ENCODE measurements at regions of chr2 and their contacts with region 1.

Region 1: GRCh38 chr2:209334198-209335017 is 89.4 kb upstream of the MAP2 start:
- DNase-seq: peak; percentile 69
- H3K4me3 ChIP-seq: no peak overlapping the region
- H3K27ac ChIP-seq: no peak overlapping the region
- H3K4me1 ChIP-seq: no peaks in the 10 kb centered on the region
- H3K27me3 ChIP-seq: peaks cover 1 to 2% of the 10 kb centered on the region in 2 experiments
- CTCF ChIP-seq: peak; percentile 73 to 78
- POLR2A ChIP-seq: no peak

Region 2: GRCh38 chr2:208175069-208175839 is 1159.2 kb before region 1 on chr2:
- CTCF ChIA-PET with region 1: interaction called, 9 read pairs
- POLR2A ChIA-PET with region 1: no interaction called
- dilution Hi-C with region 1: no loop called
- intact Hi-C with region 1: loop called (anchors 2 kb)
- DNase-seq: peak; percentile 80
- H3K4me3 ChIP-seq: no peak overlapping the region
- H3K27ac ChIP-seq: no peak overlapping the region
- H3K4me1 ChIP-seq: no peaks in the 10 kb centered on the region
- H3K27me3 ChIP-seq: no peaks in the 10 kb centered on the region
- CTCF ChIP-seq: peak; percentile 86 to 88
- POLR2A ChIP-seq: no peak

Region 3: DNA sequence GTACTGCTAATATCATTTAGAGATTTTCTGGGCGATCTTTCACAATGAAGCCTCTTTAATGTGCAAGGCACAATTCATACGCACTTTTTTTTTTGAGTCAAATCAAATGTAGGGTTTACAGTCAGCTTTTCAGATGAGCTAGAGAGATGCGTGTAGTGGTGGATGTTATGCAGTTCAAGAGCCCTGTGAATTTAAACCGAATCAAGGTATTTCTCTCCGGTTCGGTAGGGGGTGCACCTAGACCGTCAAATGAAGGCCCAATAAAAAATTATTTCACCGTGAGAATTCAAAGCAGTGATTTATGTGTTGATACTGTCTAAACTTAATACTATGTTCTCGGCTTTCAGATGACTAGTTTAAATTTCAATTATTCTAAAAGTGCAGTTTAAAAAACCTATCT is 926.7 kb before region 1 on chr2:
- CTCF ChIA-PET with region 1: interaction called, 16 read pairs
- POLR2A ChIA-PET with region 1: no interaction called
- dilution Hi-C with region 1: no loop called
- intact Hi-C with region 1: no loop called
- DNase-seq: peak; percentile 11
- H3K4me3 ChIP-seq: no peak overlapping the region
- H3K27ac ChIP-seq: no peak overlapping the region
- H3K4me1 ChIP-seq: no peaks in the 10 kb centered on the region
- H3K27me3 ChIP-seq: peaks cover 32 to 42% of the 10 kb centered on the region in 2 experiments
- CTCF ChIP-seq: no peak
- POLR2A ChIP-seq: no peak

Region 4: DNA sequence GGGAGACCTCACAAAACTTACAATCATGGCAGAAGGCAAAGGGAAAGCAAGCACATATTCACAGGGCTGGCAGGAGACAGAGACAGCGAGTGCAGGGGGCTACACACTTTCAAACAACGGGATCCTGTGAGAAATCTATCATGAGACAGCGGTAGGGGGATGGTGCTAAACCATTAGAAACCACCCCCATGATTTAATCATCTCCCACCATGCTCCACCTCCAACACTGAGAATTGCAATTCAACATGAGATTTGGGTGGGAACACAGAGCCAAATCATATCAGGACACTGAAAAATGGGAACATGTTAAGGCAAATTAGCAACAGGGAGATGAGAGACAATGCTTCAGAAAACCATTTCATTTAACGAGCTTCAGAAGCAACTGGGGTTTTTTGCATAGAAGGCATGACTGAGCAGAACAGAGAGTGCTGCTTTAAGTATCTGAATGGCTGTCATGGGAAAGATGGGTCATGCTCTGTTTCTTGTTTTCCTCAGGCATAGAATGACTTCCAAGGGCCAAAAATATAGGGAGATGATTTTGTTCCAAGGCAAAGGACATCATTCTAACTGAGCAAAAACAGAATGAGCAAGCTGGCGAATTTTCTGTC is 11.4 kb before region 1 on chr2:
- CTCF ChIA-PET with region 1: interaction called, 22 read pairs
- POLR2A ChIA-PET with region 1: no interaction called
- dilution Hi-C with region 1: no loop called
- intact Hi-C with region 1: no loop called
- DNase-seq: no peak
- H3K4me3 ChIP-seq: no peak overlapping the region
- H3K27ac ChIP-seq: no peak overlapping the region
- H3K4me1 ChIP-seq: no peaks in the 10 kb centered on the region
- H3K27me3 ChIP-seq: no peaks in the 10 kb centered on the region
- CTCF ChIP-seq: no peak
- POLR2A ChIP-seq: no peak

Region 5: DNA sequence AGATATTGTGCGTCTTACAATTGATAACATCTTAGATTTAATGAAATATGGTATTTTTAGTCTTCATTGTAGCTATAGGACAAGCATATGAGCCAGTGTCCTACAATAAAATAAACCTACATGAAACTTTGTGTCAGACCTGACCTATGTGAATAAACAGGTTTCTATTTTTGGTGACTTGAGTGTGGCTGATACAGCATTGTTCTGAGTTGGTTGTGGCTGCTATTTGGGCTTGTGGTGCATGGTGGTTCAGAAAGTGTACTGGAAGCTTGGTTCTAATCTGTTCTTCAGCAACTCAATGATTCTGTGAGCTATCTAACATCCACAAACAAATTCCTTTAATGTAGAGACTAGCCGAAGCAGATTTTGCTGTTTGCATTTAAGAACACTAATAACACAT is 24.6 kb after region 1 on chr2:
- CTCF ChIA-PET with region 1: interaction called, 10 read pairs
- POLR2A ChIA-PET with region 1: no interaction called
- dilution Hi-C with region 1: no loop called
- intact Hi-C with region 1: no loop called
- DNase-seq: no peak
- H3K4me3 ChIP-seq: no peak overlapping the region
- H3K27ac ChIP-seq: no peak overlapping the region
- H3K4me1 ChIP-seq: no peaks in the 10 kb centered on the region
- H3K27me3 ChIP-seq: no peaks in the 10 kb centered on the region
- CTCF ChIP-seq: no peak
- POLR2A ChIP-seq: no peak

Region 6: DNA sequence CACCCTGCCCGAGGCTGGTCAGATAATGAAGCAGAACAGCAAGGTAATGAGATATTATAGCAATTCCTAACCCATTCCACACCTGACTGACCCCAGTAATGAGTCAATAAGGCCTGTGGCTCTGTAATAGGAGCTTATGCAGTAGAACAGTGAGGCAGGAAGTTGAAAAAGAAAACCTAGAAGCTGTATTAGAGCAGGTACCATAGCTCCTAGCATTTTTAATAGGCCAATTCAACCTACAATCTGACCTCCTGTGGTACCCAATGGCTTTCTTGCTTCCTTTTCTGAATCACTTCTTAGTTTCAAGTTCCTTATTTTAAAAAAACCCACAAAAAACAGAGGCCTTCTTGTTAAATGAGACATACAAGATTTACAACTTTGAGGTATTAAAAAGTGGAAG is 45.9 kb after region 1 on chr2:
- CTCF ChIA-PET with region 1: interaction called, 5 read pairs
- POLR2A ChIA-PET with region 1: no interaction called
- dilution Hi-C with region 1: no loop called
- intact Hi-C with region 1: loop called (anchors 5 kb)
- DNase-seq: no peak
- H3K4me3 ChIP-seq: no peak overlapping the region
- H3K27ac ChIP-seq: no peak overlapping the region
- H3K4me1 ChIP-seq: peaks cover 9% of the 10 kb centered on the region
- H3K27me3 ChIP-seq: no peaks in the 10 kb centered on the region
- CTCF ChIP-seq: no peak
- POLR2A ChIP-seq: no peak

Region 7: GRCh38 chr2:209577376-209578357 is 243.3 kb after region 1 on chr2:
- CTCF ChIA-PET with region 1: interaction called, 142 read pairs
- POLR2A ChIA-PET with region 1: interaction called, 4 read pairs
- dilution Hi-C with region 1: no loop called
- intact Hi-C with region 1: loop called (anchors 1 kb)
- DNase-seq: peak; percentile 14
- H3K4me3 ChIP-seq: no peak overlapping the region
- H3K27ac ChIP-seq: no peak overlapping the region
- H3K4me1 ChIP-seq: no peaks in the 10 kb centered on the region
- H3K27me3 ChIP-seq: no peaks in the 10 kb centered on the region
- CTCF ChIP-seq: peak in 1 of 2 donors; percentile 12
- POLR2A ChIP-seq: no peak